ENCODE measurements at regions of chr17 and their contacts with region 1.

Region 1: DNA sequence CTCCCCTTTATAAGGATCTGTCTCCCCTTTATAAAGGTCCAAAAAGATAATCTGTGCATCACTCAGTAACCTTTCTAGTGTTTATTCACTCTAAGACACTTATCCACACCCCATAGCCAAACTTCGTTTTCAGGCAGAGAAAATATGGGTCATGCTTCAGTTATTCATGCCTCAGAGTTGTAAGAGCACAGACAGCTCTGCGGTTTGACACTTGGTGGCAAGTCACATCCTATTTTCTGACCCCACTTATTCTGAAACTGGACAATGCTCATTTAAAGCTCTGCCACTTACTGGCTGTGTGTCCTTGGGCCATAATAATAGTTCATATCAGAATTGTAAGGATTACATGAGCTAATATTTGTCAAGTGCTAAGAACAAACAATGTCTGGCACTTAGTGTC is 2.0 kb upstream of the KRTAP2-1 start:
- DNase-seq: no peak
- ATAC-seq: no peak
- H3K4me3 ChIP-seq: no peak overlapping the region
- H3K4me3 Mint-ChIP-seq: no peak overlapping the region
- H3K27ac ChIP-seq: no peak overlapping the region
- H3K27ac Mint-ChIP-seq: no peak overlapping the region
- H3K4me1 ChIP-seq: no peaks in the 10 kb centered on the region
- H3K4me1 Mint-ChIP-seq: no peaks in the 10 kb centered on the region
- H3K27me3 ChIP-seq: no peaks in the 10 kb centered on the region
- H3K27me3 Mint-ChIP-seq: peaks cover 13 to 23% (median 18%) of the 10 kb centered on the region in 5 donors

Region 2: DNA sequence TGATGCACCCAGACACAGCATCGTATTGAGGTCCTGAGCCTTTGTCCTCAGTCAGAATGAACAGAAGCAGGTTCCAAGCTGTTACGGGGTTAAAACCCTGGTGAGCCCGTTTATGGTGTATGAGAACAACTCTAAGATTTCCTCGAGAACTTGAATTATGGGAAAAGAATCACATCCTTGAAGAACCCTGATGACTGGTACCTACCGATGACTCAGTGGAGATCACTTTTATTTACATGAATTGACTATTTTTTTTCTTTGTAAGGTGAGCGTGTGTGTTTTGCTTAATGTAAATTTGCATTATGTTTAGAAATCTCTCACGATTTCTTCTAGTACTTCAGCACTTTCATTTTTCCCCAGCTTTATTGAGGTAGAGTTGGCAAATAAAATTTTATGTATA is 114.7 kb after region 1 on chr17:
- CTCF ChIA-PET with region 1: no interaction called
- POLR2A ChIA-PET with region 1: no interaction called
- intact Hi-C with region 1: loop called in 1 of 2 experiments (anchors 5 kb)
- DNase-seq: no peak
- ATAC-seq: no peak
- H3K4me3 ChIP-seq: no peak overlapping the region
- H3K4me3 Mint-ChIP-seq: no peak overlapping the region
- H3K27ac ChIP-seq: no peak overlapping the region
- H3K27ac Mint-ChIP-seq: no peak overlapping the region
- H3K4me1 ChIP-seq: no peaks in the 10 kb centered on the region
- H3K4me1 Mint-ChIP-seq: peaks cover 0 to 8% (median 0%) of the 10 kb centered on the region in 7 donors
- H3K27me3 ChIP-seq: peaks cover 0 to 4% of the 10 kb centered on the region in 2 donors
- H3K27me3 Mint-ChIP-seq: peaks cover 0 to 10% (median 0%) of the 10 kb centered on the region in 5 donors